RWPE1 (cell line): ENCODE measurements at regions of chr10 and their contacts with region 1.

Region 1: DNA sequence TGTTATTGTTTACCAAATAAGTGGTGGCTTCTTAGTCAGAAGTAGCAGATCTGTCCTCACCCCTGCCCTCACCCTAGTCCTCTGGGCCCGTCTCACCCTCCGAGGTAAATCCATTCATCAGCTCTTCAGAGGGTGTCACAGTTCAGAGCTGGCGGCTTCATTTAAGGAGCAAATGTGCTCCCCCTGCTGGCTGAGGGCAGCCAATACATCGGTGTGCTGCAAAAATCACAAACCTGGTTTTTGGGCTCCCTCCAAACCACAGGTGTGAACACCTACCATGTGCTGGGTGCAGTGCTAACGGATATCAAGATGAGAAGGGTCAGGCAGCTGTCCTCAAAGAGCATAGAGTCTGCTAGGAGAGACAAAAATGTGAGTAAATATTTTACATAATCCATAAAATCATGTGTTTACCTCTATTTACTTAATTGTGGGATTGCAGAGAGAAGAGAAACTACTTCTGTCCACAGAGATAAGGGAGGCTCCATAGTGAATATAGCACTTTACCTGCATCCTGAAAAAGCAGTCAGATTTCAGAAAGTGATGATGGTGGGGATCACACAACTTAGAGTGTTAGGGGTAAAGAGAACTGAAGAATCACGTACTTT is 15.5 kb upstream of the CRTAC1 start:
- DNase-seq: peak; percentile 73
- H3K27ac ChIP-seq: no peak overlapping the region
- CTCF ChIP-seq: peak; percentile 90

Region 2: GRCh38 chr10:97914837-97915211 is 131.1 kb before region 1 on chr10:
- CTCF ChIA-PET with region 1: interaction called, 139 read pairs
- POLR2A ChIA-PET with region 1: interaction called, 3 read pairs
- DNase-seq: peak; percentile 83
- H3K27ac ChIP-seq: no peak overlapping the region
- CTCF ChIP-seq: peak; percentile 92

Region 3: DNA sequence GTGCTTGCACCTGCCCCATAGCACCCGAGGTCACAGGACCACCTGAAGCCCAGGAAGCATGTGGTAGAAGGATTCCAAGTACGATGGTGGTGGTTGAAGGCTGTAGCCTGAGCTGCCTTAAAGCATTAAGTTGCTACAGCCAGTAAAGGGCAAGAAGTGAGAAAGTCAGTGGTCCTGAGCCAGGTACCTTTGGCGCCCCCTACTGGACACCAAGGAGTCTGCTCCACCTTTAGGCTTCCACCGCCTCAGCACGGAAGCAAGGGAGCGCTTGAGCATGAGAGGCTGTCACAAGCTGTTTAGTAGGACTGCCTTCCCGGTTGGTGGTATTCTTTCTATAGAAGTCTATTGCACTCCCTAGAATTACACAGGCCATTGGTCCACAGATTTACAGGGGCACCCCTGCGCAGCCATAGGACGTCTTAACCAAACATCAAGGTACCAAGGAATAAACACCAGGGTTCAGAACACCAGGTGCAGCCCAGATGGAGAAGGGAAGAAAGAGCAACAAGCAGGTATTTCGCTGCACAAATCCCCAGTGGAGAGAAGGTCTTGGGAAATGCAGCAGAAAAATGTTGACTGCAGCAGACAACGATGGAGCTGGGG is 17.6 kb before region 1 on chr10:
- CTCF ChIA-PET with region 1: interaction called, 19 read pairs
- POLR2A ChIA-PET with region 1: no interaction called
- DNase-seq: no peak
- H3K27ac ChIP-seq: no peak overlapping the region
- CTCF ChIP-seq: peak; percentile 39; the same call in 1 of the 2 replicates

Region 4: GRCh38 chr10:98035599-98035998 is 10.3 kb before region 1 on chr10:
- CTCF ChIA-PET with region 1: interaction called, 19 read pairs
- POLR2A ChIA-PET with region 1: no interaction called
- DNase-seq: no peak
- H3K27ac ChIP-seq: no peak overlapping the region
- CTCF ChIP-seq: no peak

Region 5: DNA sequence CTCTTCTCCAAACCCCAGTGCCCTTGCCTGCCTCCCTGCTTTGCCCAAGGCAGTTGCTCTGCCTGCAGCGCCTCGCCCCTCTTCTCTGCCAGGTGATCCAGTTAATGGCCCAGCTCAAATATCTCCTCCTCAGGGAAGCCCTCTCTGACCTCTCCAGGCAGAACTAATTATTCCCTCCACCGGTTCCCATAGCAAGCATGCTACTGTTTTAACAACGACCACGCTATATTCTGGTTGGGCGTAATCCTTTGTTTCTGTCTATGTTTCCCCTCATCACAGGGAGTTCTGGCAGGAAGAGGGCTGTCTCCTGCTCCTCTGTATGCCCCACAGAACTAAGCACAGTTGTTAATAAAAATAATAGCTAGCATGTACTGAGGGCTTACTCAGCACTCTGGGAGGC is 51.7 kb after region 1 on chr10:
- CTCF ChIA-PET with region 1: no interaction called
- POLR2A ChIA-PET with region 1: no interaction called
- DNase-seq: no peak
- H3K27ac ChIP-seq: no peak overlapping the region
- CTCF ChIP-seq: no peak